ENCODE measurements at regions of chr2 and their contacts with region 1.

Region 1: GRCh38 chr2:11829947-11830707 is 83.7 kb downstream of the LPIN1 start:
- DNase-seq: peak; percentile 85
- H3K4me3 ChIP-seq: peak overlapping the region; percentile 27 to 32
- H3K27ac ChIP-seq: peak overlapping the region; percentile 94 to 95
- H3K4me1 ChIP-seq: peaks cover 38 to 40% of the 10 kb centered on the region in 2 experiments
- H3K27me3 ChIP-seq: no peaks in the 10 kb centered on the region
- CTCF ChIP-seq: peak; percentile 61
- EP300 ChIP-seq: peak in 1 of 2 experiments; percentile 99; a peak in 2 of 4 replicates
- RAD21 ChIP-seq: peak; percentile 85

Region 2: GRCh38 chr2:11842336-11842735 is 12.2 kb after region 1 on chr2:
- CTCF ChIA-PET with region 1: interaction called, 12 read pairs
- POLR2A ChIA-PET with region 1: no interaction called
- DNase-seq: no peak
- H3K4me3 ChIP-seq: no peak overlapping the region
- H3K27ac ChIP-seq: no peak overlapping the region
- H3K4me1 ChIP-seq: peaks cover 0 to 3% of the 10 kb centered on the region in 2 experiments; a peak in 1 of 4 replicates
- H3K27me3 ChIP-seq: no peaks in the 10 kb centered on the region
- CTCF ChIP-seq: no peak
- EP300 ChIP-seq: no peak
- RAD21 ChIP-seq: no peak

Region 3: DNA sequence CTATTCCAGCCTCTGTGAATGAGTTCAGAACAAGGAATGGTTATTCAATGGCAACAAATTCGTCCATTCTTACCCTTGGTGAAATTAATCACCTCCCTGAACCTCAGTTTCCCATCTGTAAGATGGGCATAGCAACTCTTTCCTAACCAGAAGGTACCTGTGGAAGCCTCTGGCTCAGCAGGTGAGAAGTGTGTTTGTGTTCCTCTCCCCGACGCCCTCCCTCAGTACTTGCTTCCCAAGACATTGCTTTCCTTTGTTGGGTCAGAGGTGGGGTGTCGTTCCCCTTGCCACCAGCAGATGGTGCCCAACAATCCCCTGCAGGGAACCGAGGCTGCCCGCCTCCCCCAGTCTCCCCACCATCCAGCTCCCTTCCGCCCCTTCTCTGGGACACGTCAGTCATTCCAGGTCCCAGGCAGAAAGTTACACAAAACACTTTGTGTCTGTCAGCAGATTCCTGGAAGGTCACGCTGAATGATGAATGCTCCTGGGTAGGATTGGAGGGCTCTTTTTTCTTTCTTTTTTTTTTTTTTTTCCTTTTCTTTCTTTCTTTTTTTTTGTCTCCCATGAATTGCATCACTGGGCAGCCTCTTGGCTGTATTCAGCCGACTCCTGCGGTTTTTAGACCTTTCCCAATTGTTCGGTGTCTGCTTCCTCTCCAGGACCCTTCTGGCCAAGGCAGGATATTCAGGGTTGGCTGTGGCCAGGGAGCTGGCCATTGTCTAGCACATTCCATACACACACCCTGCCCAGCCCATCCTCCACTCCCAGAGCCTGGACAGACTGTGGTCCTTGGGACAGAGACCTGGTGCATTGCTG is 33.6 kb after region 1 on chr2:
- CTCF ChIA-PET with region 1: interaction called, 34 read pairs
- POLR2A ChIA-PET with region 1: no interaction called
- DNase-seq: peak; percentile 92
- H3K4me3 ChIP-seq: peak overlapping the region in 1 of 2 experiments; percentile 14; a peak in 1 of 4 replicates
- H3K27ac ChIP-seq: peak overlapping the region; percentile 7 to 25; a peak in 1 of 4 replicates
- H3K4me1 ChIP-seq: peaks cover 5 to 6% of the 10 kb centered on the region in 2 experiments; a peak in 3 of 4 replicates
- H3K27me3 ChIP-seq: no peaks in the 10 kb centered on the region
- CTCF ChIP-seq: peak; percentile 99
- EP300 ChIP-seq: peak in 1 of 2 experiments; percentile 13; a peak in 1 of 4 replicates
- RAD21 ChIP-seq: peak; percentile 91

Region 4: GRCh38 chr2:12948961-12949353 is 1118.8 kb after region 1 on chr2:
- CTCF ChIA-PET with region 1: interaction called, 15 read pairs
- POLR2A ChIA-PET with region 1: interaction called, 8 read pairs
- DNase-seq: no peak
- H3K4me3 ChIP-seq: no peak overlapping the region; a peak in 1 of 4 replicates
- H3K27ac ChIP-seq: peak overlapping the region; percentile 59 to 100
- H3K4me1 ChIP-seq: peaks cover 32 to 37% of the 10 kb centered on the region in 2 experiments
- H3K27me3 ChIP-seq: no peaks in the 10 kb centered on the region
- CTCF ChIP-seq: no peak
- EP300 ChIP-seq: no peak
- RAD21 ChIP-seq: no peak

Region 5: DNA sequence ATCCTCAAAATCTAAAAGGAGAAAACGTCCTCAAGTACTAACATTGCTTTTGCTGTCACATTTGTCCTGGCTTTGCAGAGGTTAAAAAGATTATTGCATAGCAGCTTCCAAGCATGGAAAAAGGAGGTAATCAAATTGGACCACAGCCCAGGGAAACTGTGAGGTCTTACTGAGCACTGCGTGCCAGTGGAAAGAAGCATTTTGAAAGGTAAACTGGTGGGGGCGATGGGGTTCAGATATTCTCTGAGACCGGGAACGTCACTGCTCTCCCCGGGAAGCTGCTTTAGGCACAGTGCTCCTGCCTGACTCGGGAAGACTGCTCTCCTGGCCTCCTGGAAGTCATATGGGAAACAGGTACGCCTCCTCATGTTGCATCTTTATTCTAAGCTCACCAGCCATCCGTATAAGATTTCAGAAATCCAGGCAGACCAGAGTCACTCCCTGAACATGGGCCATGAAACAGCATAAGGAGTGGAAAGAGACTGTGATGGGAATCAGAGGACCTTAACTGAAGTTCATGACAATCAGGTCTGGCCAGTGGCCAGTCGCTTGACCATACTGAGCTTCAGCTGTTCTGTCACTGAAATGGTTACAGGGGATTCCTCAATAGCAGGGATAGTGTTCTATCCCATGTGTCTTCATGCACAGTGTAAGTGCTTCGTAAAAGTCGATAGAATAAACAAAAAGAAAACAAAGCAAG is 1170.7 kb after region 1 on chr2:
- CTCF ChIA-PET with region 1: interaction called, 130 read pairs
- POLR2A ChIA-PET with region 1: interaction called, 3 read pairs
- DNase-seq: no peak
- H3K4me3 ChIP-seq: no peak overlapping the region
- H3K27ac ChIP-seq: no peak overlapping the region
- H3K4me1 ChIP-seq: peaks cover 16 to 31% of the 10 kb centered on the region in 2 experiments
- H3K27me3 ChIP-seq: no peaks in the 10 kb centered on the region
- CTCF ChIP-seq: no peak
- EP300 ChIP-seq: no peak
- RAD21 ChIP-seq: no peak

Measured in SK-N-SH (cell line).